Endothelial cell of umbilical vein (primary cell): ENCODE measurements at regions of chr1 and their contacts with region 1.

Region 1: GRCh38 chr1:93629099-93630059 is 52.3 kb downstream of the BCAR3 start:
- DNase-seq: peak; percentile 82
- H3K4me3 ChIP-seq: no peak overlapping the region
- H3K27ac ChIP-seq: peak overlapping the region; percentile 19
- H3K4me1 ChIP-seq: peaks cover 47% of the 10 kb centered on the region
- H3K27me3 ChIP-seq: no peaks in the 10 kb centered on the region
- CTCF ChIP-seq: peak; percentile 58 to 64
- POLR2A ChIP-seq: no peak

Region 2: GRCh38 chr1:93304716-93305138 is 324.7 kb before region 1 on chr1:
- CTCF ChIA-PET with region 1: interaction called, 10 read pairs
- POLR2A ChIA-PET with region 1: no interaction called
- dilution Hi-C with region 1: no loop called
- intact Hi-C with region 1: loop called (anchors 2 kb)
- DNase-seq: peak; percentile 54
- H3K4me3 ChIP-seq: no peak overlapping the region
- H3K27ac ChIP-seq: no peak overlapping the region
- H3K4me1 ChIP-seq: no peaks in the 10 kb centered on the region
- H3K27me3 ChIP-seq: no peaks in the 10 kb centered on the region
- CTCF ChIP-seq: peak; percentile 63 to 66
- POLR2A ChIP-seq: no peak

Region 3: GRCh38 chr1:93567255-93567918 is 62.0 kb before region 1 on chr1:
- CTCF ChIA-PET with region 1: no interaction called
- POLR2A ChIA-PET with region 1: interaction called, 3 read pairs
- dilution Hi-C with region 1: no loop called
- intact Hi-C with region 1: loop called (anchors 1 kb)
- DNase-seq: peak; percentile 81
- H3K4me3 ChIP-seq: no peak overlapping the region
- H3K27ac ChIP-seq: peak overlapping the region; percentile 34
- H3K4me1 ChIP-seq: peaks cover 24% of the 10 kb centered on the region
- H3K27me3 ChIP-seq: no peaks in the 10 kb centered on the region
- CTCF ChIP-seq: no peak
- POLR2A ChIP-seq: no peak

Region 4: DNA sequence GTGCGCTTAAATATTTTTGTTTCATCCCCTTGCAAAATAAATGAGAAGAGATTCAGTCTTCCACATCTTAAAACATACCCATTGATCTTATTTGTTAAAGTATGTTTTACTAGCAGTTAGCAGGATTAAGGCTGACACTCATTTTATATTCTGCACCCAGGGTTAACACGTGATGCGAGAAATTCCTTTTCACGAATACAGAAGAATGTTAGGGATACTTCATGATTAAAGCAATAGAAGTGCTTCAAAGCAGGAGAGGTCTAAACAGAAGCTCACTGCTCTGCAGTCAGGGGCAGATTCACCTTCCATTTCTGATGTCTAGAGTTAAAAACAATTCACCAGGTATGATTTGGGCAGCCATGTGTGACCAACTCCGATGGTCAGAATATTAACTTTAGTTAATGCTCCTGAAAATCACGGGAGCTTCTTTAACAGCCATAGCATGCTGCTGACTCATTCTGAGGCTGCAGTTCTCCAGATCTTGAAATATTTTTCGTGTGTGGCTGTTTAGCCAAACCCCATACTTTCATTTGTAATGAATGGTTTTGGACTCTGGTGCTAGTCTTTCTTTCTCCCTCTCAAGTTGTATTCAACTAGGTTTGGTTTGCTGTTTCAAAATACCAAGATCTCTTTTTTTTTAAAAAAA is 32.6 kb after region 1 on chr1:
- CTCF ChIA-PET with region 1: interaction called, 98 read pairs
- POLR2A ChIA-PET with region 1: no interaction called
- dilution Hi-C with region 1: no loop called
- intact Hi-C with region 1: loop called (anchors 1 kb)
- DNase-seq: peak; percentile 63
- H3K4me3 ChIP-seq: peak overlapping the region in 1 of 3 experiments; percentile 18
- H3K27ac ChIP-seq: peak overlapping the region; percentile 92
- H3K4me1 ChIP-seq: peaks cover 50% of the 10 kb centered on the region
- H3K27me3 ChIP-seq: no peaks in the 10 kb centered on the region
- CTCF ChIP-seq: no peak
- POLR2A ChIP-seq: no peak

Region 5: GRCh38 chr1:93701619-93702018 is 72.2 kb after region 1 on chr1:
- CTCF ChIA-PET with region 1: interaction called, 13 read pairs
- POLR2A ChIA-PET with region 1: no interaction called
- dilution Hi-C with region 1: no loop called
- intact Hi-C with region 1: no loop called
- DNase-seq: peak; percentile 55
- H3K4me3 ChIP-seq: no peak overlapping the region
- H3K27ac ChIP-seq: peak overlapping the region; percentile 25
- H3K4me1 ChIP-seq: peaks cover 9% of the 10 kb centered on the region
- H3K27me3 ChIP-seq: no peaks in the 10 kb centered on the region
- CTCF ChIP-seq: no peak
- POLR2A ChIP-seq: no peak

Region 6: DNA sequence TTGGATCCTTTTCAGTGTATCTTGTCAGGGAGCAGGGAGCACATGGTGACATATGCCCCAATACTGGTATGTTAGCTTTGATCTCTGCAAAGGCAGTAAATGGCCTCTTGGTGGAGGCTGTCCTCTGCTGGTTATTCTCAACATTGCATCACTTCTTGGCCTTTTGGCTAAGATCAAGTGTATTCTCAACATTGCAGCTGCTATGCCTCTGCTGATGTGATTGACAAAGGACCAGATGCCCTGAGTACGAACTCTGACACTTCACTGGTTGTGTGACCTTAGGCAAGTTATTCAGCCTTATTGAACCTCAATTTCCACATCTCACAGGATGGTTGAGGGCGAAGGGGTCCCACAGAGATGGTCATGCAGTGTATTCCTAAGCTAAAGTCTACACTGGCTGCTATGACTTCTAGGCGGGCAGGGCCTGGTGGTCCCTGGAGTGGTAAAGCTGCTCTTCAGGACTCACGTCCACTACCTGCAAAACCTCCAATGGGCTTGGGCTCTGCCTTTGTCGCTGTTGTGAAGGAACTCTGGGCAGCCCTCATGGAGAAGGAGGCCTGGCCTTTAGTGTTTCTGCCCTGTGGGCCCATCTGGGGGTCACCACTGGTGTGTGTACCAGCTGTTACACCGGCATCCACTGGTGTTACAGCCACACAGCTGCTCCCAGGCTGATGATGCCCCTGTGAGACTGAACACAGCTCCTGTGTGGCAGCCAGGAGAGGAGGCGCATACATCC is 184.8 kb after region 1 on chr1:
- CTCF ChIA-PET with region 1: interaction called, 490 read pairs
- POLR2A ChIA-PET with region 1: interaction called, 10 read pairs
- dilution Hi-C with region 1: no loop called
- intact Hi-C with region 1: loop called (anchors 1 kb)
- DNase-seq: peak; percentile 89
- H3K4me3 ChIP-seq: no peak overlapping the region
- H3K27ac ChIP-seq: no peak overlapping the region
- H3K4me1 ChIP-seq: peaks cover 39% of the 10 kb centered on the region
- H3K27me3 ChIP-seq: no peaks in the 10 kb centered on the region
- CTCF ChIP-seq: peak; percentile 89 to 97
- POLR2A ChIP-seq: no peak

Region 7: DNA sequence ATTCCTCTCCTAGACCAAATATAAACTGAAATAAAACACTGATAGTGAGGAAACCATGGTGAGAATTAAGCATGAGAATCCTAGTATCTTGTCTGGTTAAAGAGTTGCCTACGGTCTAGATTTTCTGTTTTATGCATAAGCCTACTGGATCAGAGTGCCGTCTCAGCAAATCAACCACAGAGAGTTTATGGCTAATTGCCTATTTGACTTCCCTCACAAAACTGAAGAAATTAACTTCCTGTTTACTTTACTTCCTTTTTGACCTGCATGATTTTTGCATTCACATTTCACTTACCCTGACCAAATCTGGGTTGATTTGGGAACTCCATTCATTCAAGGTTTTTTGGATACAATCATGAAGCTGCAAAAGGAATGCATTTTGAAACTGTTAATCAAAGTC is 274.8 kb after region 1 on chr1:
- CTCF ChIA-PET with region 1: no interaction called
- POLR2A ChIA-PET with region 1: no interaction called
- dilution Hi-C with region 1: no loop called
- intact Hi-C with region 1: no loop called
- DNase-seq: peak; percentile 12
- H3K4me3 ChIP-seq: no peak overlapping the region
- H3K27ac ChIP-seq: no peak overlapping the region
- H3K4me1 ChIP-seq: peaks cover 43% of the 10 kb centered on the region
- H3K27me3 ChIP-seq: no peaks in the 10 kb centered on the region
- CTCF ChIP-seq: no peak
- POLR2A ChIP-seq: no peak